ENCODE measurements at regions of chr6 and their contacts with region 1.

Region 1: GRCh38 chr6:159134701-159135364 is 34.4 kb upstream of the FNDC1 start:
- DNase-seq: peak; percentile 75
- ATAC-seq: peak; percentile 91
- H3K4me3 ChIP-seq: peak overlapping the region in 1 of 2 experiments; percentile 20; a peak in 2 of 4 replicates
- H3K27ac ChIP-seq: no peak overlapping the region
- H3K4me1 ChIP-seq: peaks cover 0 to 12% of the 10 kb centered on the region in 2 experiments; a peak in 2 of 4 replicates
- H3K27me3 ChIP-seq: no peaks in the 10 kb centered on the region
- CTCF ChIP-seq: peak; percentile 93 to 99 (median 99)
- POLR2A ChIP-seq: no peak
- RAD21 ChIP-seq: peak; percentile 98

Region 2: GRCh38 chr6:159008656-159009288 is 126.1 kb before region 1 on chr6:
- CTCF ChIA-PET with region 1: interaction called, 34 read pairs
- POLR2A ChIA-PET with region 1: no interaction called
- RAD21 ChIA-PET with region 1: interaction called in 1 of 2 experiments, 7 read pairs
- intact Hi-C with region 1: loop called (anchors 1 kb)
- DNase-seq: no peak
- ATAC-seq: peak; percentile 81
- H3K4me3 ChIP-seq: no peak overlapping the region
- H3K27ac ChIP-seq: no peak overlapping the region
- H3K4me1 ChIP-seq: peaks cover 0 to 6% of the 10 kb centered on the region in 2 experiments; a peak in 1 of 4 replicates
- H3K27me3 ChIP-seq: no peaks in the 10 kb centered on the region
- CTCF ChIP-seq: peak in 2 of 3 experiments; percentile 39 to 53; a peak in 4 of 6 replicates
- POLR2A ChIP-seq: no peak
- RAD21 ChIP-seq: no peak

Region 3: GRCh38 chr6:159042003-159042825 is 92.6 kb before region 1 on chr6:
- CTCF ChIA-PET with region 1: interaction called, 24 read pairs
- POLR2A ChIA-PET with region 1: interaction called, 5 read pairs
- RAD21 ChIA-PET with region 1: interaction called in 1 of 2 experiments, 3 read pairs
- intact Hi-C with region 1: loop called (anchors 1 kb)
- DNase-seq: peak; percentile 68
- ATAC-seq: peak; percentile 99
- H3K4me3 ChIP-seq: 0 out of 4 replicates have a peak overlapping the region, but pooled peaks of 1 of the 2 experiments have one; percentile 10
- H3K27ac ChIP-seq: no peak overlapping the region
- H3K4me1 ChIP-seq: peaks cover 0 to 11% of the 10 kb centered on the region in 2 experiments; a peak in 2 of 4 replicates
- H3K27me3 ChIP-seq: no peaks in the 10 kb centered on the region
- CTCF ChIP-seq: peak; percentile 86 to 99 (median 98)
- POLR2A ChIP-seq: no peak
- RAD21 ChIP-seq: peak; percentile 82

Region 4: GRCh38 chr6:159053781-159054398 is 80.9 kb before region 1 on chr6:
- CTCF ChIA-PET with region 1: no interaction called
- POLR2A ChIA-PET with region 1: no interaction called
- RAD21 ChIA-PET with region 1: no interaction called
- intact Hi-C with region 1: no loop called
- DNase-seq: no peak
- ATAC-seq: no peak
- H3K4me3 ChIP-seq: no peak overlapping the region
- H3K27ac ChIP-seq: no peak overlapping the region
- H3K4me1 ChIP-seq: no peaks in the 10 kb centered on the region
- H3K27me3 ChIP-seq: peaks cover 9% of the 10 kb centered on the region
- CTCF ChIP-seq: no peak
- POLR2A ChIP-seq: no peak
- RAD21 ChIP-seq: no peak

Measured in HCT116 (cell line).